ENCODE measurements at regions of chr17 and their contacts with region 1.

Region 1: GRCh38 chr17:8173056-8173870 is 2.9 kb downstream of the TMEM107 start:
- DNase-seq: peak; percentile 91
- H3K4me3 ChIP-seq: peak overlapping the region; percentile 55
- CTCF ChIP-seq: no peak

Region 2: DNA sequence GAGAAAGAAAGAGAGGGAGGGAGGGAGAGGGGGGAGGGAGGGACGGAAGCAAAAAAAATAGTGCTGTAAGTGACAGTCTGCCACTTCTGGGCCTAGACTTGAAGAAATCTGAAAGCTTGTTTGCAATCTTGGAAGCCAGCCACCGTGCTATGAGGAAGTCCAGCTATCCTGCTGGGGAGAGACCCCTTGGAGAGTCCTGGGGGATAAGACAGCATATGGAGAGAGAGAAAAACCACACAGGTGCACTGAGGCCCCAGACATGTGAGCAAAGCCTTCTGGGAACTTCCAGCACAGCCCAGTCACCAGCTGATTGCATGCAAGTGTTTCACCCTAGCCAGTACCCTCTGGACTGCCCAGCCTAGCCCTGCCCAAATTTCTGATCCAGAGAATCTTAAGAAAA is 73.2 kb before region 1 on chr17:
- CTCF ChIA-PET with region 1: no interaction called
- POLR2A ChIA-PET with region 1: no interaction called
- DNase-seq: no peak
- H3K4me3 ChIP-seq: no peak overlapping the region
- CTCF ChIP-seq: no peak

Region 3: DNA sequence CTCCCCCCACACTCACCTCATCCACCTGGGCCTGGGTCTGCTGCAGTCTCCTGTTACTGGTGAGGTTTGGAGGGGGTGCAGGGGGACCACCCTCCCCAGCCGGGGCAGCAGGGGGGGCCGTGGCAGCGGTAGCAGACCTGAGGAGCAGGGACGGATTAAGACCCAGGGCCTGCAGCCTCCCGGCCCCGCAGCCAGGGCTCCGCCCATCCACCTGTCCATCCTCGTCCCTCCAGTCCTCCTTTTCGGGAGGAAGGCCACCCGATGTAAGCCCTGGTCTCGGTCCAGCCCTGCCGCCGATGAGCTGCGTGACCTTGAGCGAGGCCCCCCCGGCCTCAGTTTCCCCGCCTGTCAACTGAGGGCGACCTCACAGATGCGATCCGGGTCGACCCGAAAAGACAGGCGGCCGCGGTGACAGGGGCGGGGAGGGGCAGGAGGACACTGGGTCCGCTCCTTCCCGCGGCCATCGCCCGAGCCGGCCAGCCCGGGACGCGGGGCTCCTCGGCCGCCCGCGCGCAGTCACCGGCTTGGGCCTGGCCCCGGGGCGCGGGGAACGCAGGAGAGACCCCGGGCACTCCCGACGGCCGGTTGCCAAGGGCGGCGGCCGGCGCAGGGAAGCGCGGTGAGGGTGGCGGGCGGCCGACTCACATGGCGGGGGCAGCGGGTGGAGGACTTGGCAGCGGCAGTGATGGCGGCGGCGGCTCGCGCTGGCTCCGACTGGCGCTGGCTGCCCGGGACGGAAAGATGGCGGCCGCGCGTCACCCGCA is 10.8 kb before region 1 on chr17 and contains the start of gene VAMP2:
- CTCF ChIA-PET with region 1: interaction called, 13 read pairs
- POLR2A ChIA-PET with region 1: interaction called, 14 read pairs
- DNase-seq: no peak
- H3K4me3 ChIP-seq: peak within 1 kb of the TSS; percentile 92
- CTCF ChIP-seq: no peak

Region 4: DNA sequence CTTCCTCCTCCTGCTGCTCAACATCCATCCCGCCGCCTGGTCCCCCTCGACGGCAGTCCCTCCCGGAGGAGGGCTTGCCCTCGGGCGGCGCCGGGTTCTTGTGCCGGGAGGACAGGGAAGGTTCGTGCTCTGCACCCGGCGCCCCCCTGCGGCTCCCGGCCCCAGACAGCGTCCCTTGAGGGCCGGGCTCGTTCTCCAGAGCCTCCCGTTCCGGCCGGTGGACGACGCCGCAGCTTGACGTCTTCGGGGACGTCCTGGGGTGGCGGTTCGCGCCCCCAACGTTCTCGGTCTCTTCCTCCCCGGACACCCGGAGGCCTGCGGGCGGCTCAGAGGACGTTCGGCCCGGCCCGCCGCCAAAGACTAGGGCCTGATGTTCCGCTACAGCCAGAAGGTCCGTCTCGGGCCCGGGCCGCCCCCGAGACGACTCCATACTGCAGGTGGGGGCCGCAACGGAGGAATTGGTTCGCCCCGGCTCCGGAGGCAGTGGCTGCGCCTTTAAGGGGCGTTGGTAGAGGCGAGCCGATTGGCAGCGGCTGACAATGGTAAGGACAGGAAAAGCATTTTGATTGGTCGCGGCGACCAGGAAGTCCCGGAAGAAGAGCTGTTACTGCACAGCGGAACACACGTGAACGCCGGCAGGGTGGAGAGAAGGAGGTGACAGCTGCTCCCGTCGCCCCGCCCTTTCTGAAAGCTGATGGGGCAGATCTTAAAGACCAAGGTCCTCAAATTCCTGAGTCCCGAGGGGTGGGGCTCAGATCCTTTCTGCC is 16.6 kb after region 1 on chr17 and contains the start of gene BORCS6:
- CTCF ChIA-PET with region 1: interaction called, 3 read pairs
- POLR2A ChIA-PET with region 1: interaction called, 11 read pairs
- DNase-seq: peak; percentile 93
- H3K4me3 ChIP-seq: peak within 1 kb of the TSS; percentile 79
- CTCF ChIP-seq: no peak

Region 5: DNA sequence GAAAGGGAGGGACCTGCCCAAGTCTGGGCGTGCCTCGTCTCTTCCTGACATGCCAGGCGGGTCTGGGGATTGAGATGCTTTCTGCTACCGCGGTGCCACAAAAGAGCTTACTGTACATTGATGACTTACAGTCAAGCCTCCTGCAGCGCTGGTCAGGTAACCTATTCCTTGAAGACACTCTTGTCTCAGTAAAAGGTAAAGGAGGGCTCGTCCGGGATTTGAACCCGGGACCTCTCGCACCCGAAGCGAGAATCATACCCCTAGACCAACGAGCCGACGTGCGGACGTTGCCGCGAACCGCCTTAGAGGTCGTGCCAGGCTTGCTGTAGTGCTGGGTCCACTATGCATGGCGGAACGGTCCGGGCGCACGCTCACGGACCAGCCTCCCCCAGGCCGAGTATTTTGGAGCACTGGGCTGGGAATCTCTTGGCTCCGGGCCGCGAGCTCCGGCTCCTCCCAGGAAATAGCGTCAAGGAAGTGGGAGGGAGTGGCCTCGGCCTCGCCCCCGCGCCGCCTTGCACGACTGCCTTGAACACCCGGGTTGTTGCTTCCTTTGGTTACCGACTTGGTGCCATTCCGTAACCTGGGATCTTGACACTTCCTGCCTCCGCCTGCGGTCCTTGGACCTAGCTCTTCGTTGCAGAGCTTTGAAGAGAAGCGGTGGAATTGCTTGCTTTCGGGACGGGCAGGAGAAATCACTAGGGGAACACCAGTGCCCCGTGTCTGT is 49.5 kb after region 1 on chr17:
- CTCF ChIA-PET with region 1: no interaction called
- POLR2A ChIA-PET with region 1: interaction called, 12 read pairs
- DNase-seq: peak; percentile 62
- H3K4me3 ChIP-seq: peak overlapping the region; percentile 89
- CTCF ChIP-seq: no peak